OCI-LY7 (cell line): ENCODE measurements at regions of chr1 and their contacts with region 1.

Region 1: DNA sequence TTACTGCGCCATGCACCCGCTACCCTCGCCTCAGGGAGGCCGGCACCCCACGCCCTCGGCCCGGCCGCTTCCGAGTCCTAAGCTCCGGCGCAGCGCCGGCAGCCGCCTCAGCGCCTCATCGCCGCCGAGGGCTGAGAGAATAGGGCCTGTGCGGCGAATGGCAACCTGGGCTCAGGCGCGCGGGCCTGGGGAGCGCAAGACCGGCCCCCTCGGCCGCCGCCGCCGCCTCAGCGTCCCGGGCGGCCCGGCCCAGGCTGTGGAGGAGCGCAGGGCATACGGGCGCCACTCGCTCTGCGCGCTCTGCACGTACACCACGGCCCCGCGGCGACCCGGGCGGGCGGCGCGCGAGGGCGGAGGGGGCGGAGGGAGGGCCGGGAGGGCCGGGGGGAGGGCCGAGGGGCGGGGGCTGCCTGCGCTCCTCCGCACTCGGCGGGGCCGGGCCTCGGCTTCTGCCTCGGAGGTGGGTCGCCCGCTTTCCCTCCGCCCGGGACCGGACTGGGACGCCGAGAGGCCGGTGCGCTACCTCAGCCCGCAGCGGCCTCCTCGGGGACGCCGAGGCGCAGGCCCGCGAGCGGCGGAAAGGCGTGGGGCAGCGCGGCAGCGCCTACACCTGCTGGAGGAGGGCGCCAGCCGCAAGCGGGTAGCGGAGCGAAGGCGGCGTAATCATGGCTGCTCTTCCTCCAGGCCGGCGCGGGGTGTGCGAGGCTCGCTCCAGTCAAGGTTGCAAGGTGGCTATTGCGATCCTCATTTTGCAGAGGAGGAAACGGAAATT is at the start of gene EGLN1:
- DNase-seq: peak; percentile 89
- H3K4me3 ChIP-seq: peak within 1 kb of the TSS; percentile 83
- H3K27ac ChIP-seq: peak within 1 kb of the TSS; percentile 75
- H3K4me1 ChIP-seq: peaks cover 28% of the 10 kb centered on the region
- CTCF ChIP-seq: peak; percentile 48
- total RNA-seq, gene EGLN1: 17.8 and 19.0 TPM in 2 replicates

Region 2: GRCh38 chr1:231240883-231241735 is 181.1 kb before region 1 on chr1 and contains the start of gene GNPAT:
- CTCF ChIA-PET with region 1: no interaction called
- POLR2A ChIA-PET with region 1: no interaction called
- intact Hi-C with region 1: loop called (anchors 5 kb)
- DNase-seq: peak; percentile 90
- H3K4me3 ChIP-seq: peak within 1 kb of the TSS; percentile 97
- H3K27ac ChIP-seq: peak within 1 kb of the TSS; percentile 60
- H3K4me1 ChIP-seq: peaks cover 25% of the 10 kb centered on the region
- CTCF ChIP-seq: no peak
- total RNA-seq, gene GNPAT: 37.9 and 51.7 TPM in 2 replicates

Region 3: DNA sequence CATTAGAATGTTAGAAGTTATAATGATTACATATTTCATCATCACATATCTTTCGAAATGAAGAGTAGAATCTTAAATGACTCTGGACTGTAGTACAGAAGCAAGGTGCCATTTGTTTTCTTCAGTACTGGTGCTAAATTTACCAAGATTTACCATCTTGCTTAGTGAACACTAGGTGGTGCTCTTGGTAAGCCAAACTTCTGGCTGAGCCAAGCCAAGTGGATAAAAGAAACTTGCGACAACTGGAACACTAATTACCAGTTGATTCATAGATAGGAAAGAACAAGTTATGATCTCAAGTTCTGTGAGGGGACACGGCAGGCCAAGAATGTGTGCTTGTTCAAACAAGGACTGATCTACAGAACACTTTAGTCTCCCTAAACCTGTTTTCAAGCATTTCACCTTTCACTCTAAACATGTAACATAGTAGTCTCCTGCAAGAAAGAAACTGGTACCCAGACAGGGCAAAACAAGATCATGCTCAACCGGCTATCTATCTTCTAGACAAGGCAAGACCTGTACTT is 64.3 kb before region 1 on chr1:
- CTCF ChIA-PET with region 1: no interaction called
- POLR2A ChIA-PET with region 1: interaction called, 3 read pairs
- intact Hi-C with region 1: loop called (anchors 2 kb)
- DNase-seq: peak; percentile 74
- H3K4me3 ChIP-seq: no peak overlapping the region
- H3K27ac ChIP-seq: no peak overlapping the region
- H3K4me1 ChIP-seq: no peaks in the 10 kb centered on the region
- CTCF ChIP-seq: peak; percentile 96

Region 4: GRCh38 chr1:231410036-231410612 is 12.1 kb before region 1 on chr1:
- CTCF ChIA-PET with region 1: no interaction called
- POLR2A ChIA-PET with region 1: interaction called, 21 read pairs
- intact Hi-C with region 1: no loop called
- DNase-seq: no peak
- H3K4me3 ChIP-seq: no peak overlapping the region
- H3K27ac ChIP-seq: no peak overlapping the region
- H3K4me1 ChIP-seq: no peaks in the 10 kb centered on the region
- CTCF ChIP-seq: no peak

Region 5: DNA sequence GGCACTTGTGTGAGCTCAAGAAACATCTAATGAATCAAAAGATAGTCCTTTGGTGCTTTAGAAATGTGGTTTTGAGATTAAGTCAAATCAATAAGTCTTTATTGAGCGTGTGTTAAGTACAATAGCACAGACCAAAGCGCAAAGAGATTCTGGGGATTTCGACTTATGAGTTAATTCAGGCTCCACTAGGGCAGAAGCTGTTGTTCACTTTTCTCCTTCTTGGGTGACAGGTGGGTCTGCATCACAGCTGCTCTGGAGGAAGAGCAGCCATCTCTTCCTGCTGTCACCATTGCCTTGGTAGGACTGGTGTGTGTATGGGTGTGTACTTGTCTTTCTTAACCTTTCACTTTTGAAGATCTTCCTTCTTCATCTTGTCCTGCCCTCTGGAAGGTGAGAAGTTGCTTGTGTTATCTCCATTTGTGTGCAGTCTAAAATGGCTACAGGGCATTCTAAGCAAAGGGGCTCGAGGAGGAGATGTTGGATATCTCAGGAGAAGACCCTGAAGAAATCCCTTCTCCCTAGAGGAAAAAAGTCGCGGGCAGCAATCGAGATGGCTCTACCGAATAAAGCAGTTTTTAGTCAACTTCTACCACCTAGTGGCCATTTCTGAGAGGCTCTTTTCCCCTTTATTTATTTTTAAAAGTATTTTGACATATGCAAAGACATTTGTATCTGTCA is 181.6 kb after region 1 on chr1:
- CTCF ChIA-PET with region 1: no interaction called
- POLR2A ChIA-PET with region 1: no interaction called
- intact Hi-C with region 1: loop called (anchors 5 kb)
- DNase-seq: peak; percentile 65
- H3K4me3 ChIP-seq: peak overlapping the region; percentile 66
- H3K27ac ChIP-seq: no peak overlapping the region
- H3K4me1 ChIP-seq: no peaks in the 10 kb centered on the region
- CTCF ChIP-seq: peak; percentile 97